ENCODE measurements at regions of chr5 and their contacts with region 1.

Region 1: DNA sequence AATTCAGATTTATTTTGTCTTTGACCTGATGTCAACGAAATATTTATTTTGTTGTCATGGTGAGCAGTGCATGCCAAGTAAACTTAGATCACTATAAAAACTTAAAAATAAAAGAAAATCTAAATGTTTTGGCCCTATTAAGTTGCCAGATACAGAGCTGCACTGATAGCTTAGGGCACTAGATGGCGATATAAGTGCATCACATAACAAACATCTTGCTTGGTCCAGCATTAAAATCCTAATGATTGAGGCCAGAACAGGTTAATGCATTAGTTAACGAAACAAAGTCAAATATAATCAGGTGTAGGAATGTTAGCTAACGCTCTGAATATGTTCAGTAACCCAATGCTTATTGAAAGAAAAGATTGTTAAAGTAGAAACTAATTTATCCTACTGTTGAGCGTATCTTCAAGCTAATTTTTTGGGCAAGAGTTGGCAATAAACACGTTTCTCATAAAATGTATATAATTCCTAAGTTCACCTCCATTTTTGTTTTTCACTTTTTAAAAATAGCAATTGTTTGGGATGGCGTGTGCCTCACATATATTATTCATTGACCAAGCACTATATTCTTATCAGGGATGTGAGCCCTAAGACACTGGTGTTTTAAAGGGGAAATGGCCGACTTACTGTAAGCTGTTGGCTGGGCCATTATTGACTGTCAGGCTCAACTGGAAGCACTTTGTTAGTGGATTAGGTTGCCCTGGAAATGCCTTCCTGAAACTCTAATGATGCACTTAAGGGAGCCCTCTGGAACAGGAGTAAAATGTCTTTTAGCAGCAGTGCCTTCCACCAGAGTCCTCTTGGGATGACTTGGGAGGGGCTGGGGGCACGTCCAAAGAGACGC is 33.3 kb downstream of the KCTD16 start:
- DNase-seq: no peak
- H3K4me3 ChIP-seq: no peak overlapping the region
- H3K27ac ChIP-seq: no peak overlapping the region
- H3K27me3 ChIP-seq: peaks cover 10% of the 10 kb centered on the region
- CTCF ChIP-seq: peak; percentile 91

Region 2: DNA sequence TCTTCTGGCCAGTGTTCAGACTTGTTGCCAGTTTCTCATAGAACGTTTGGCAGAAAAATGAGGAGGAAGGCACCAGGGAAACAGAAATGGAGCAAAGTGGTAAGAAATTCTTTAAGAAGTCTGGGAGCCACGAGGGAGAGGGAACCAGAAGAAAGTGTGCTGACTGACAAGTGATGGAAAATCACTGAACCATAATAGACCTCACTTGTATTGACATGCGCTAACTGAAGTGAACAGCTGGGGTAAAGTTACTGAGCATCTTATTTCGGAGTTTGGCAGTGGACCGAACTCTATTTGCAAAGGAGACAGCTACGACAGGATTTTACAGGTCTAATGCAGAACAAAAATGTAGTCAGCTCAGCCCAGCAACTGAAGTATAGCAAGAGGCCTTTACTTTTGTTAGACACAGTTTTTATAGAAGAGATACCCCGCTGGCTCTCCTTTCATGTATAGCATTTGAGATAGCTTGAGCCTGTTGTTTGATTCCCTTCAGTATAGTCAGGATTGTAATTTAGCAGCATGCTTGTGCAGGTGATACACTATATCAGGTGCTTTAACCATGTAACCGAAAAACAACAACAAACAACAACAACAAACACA is 338.4 kb before region 1 on chr5:
- CTCF ChIA-PET with region 1: no interaction called
- POLR2A ChIA-PET with region 1: no interaction called
- DNase-seq: no peak
- H3K4me3 ChIP-seq: no peak overlapping the region
- H3K27ac ChIP-seq: no peak overlapping the region
- H3K27me3 ChIP-seq: no peaks in the 10 kb centered on the region
- CTCF ChIP-seq: no peak

Region 3: GRCh38 chr5:143908959-143909358 is 295.0 kb before region 1 on chr5:
- CTCF ChIA-PET with region 1: no interaction called
- POLR2A ChIA-PET with region 1: no interaction called
- DNase-seq: no peak
- H3K4me3 ChIP-seq: no peak overlapping the region
- H3K27ac ChIP-seq: no peak overlapping the region
- H3K27me3 ChIP-seq: no peaks in the 10 kb centered on the region
- CTCF ChIP-seq: no peak

Region 4: DNA sequence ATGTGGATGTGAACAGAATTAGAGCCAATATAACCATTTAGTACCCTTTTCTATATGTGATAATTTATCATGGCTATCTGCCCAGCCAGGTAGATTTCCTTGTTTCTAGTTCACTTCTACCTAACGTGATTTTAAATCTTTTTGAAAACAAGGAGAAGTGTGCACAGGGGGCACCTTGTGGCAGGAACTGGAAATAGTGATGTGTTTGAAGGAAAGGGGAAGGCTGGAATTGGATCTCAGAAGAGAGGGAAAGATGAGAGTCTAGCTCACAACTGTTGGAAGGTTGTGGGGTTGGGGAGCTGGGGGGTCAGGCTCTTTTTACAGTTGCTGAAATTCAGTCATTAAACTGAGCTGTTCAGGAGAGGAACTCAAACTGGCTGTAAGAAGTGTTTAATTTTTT is 186.2 kb after region 1 on chr5:
- CTCF ChIA-PET with region 1: interaction called, 27 read pairs
- POLR2A ChIA-PET with region 1: no interaction called
- DNase-seq: no peak
- H3K4me3 ChIP-seq: no peak overlapping the region
- H3K27ac ChIP-seq: no peak overlapping the region
- H3K27me3 ChIP-seq: no peaks in the 10 kb centered on the region
- CTCF ChIP-seq: peak; percentile 44

Region 5: DNA sequence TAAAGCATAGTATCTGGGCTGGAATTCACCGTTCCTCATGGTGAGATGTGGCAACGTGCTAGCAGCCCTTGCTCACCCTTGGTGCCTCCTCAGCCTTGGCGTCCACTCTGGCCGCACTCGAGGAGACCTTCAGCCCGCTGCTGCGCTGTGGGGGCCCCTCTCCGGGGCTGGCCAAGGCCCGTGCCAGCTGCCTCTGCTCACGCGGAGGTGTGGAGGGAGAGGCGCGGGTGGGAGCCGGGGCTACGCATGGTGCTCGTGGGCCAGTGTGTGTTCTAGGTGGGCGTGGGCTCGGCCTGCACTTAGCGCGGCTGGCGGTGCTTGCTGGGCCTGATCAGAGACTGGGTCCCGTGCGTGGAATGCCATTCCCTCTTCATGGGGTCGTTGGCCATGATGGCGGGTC is 390.9 kb after region 1 on chr5:
- CTCF ChIA-PET with region 1: no interaction called
- POLR2A ChIA-PET with region 1: no interaction called
- DNase-seq: no peak
- H3K4me3 ChIP-seq: no peak overlapping the region
- H3K27ac ChIP-seq: no peak overlapping the region
- H3K27me3 ChIP-seq: peaks cover 6% of the 10 kb centered on the region
- CTCF ChIP-seq: no peak

Region 6: GRCh38 chr5:145044970-145045369 is 841.0 kb after region 1 on chr5:
- CTCF ChIA-PET with region 1: no interaction called
- POLR2A ChIA-PET with region 1: no interaction called
- DNase-seq: no peak
- H3K4me3 ChIP-seq: no peak overlapping the region
- H3K27ac ChIP-seq: no peak overlapping the region
- H3K27me3 ChIP-seq: no peaks in the 10 kb centered on the region
- CTCF ChIP-seq: no peak

Region 7: DNA sequence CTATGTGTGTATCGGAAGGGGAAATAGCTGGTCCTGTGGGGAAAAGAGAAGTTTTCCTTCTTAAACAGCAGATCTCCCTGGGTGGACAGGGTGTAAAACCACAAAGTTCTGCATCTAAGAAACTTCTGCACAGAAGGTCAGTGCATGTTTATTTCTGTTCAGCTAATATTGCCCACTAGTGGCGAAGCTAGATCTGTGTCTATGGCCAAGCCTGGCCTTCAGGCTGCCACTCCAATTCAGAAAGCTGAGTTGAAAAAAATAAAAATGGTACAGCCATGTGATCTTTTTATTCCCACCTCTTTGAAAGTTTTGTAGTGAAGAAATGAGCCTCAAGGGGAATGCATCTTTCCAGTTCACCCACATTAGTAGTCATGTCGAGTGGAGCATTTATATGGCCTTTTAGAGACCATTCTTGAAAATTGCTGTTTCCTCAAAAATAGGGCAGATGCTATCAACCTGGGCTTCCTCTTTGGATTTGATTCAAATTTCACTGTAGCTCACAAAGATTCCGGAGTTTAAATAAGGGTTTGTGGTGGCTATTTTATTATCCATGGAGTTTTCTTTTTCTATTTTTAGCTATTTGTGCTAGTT is 1143.1 kb after region 1 on chr5:
- CTCF ChIA-PET with region 1: interaction called, 10 read pairs
- POLR2A ChIA-PET with region 1: no interaction called
- DNase-seq: peak; percentile 13
- H3K4me3 ChIP-seq: no peak overlapping the region
- H3K27ac ChIP-seq: no peak overlapping the region
- H3K27me3 ChIP-seq: no peaks in the 10 kb centered on the region
- CTCF ChIP-seq: peak; percentile 75

Region 8: DNA sequence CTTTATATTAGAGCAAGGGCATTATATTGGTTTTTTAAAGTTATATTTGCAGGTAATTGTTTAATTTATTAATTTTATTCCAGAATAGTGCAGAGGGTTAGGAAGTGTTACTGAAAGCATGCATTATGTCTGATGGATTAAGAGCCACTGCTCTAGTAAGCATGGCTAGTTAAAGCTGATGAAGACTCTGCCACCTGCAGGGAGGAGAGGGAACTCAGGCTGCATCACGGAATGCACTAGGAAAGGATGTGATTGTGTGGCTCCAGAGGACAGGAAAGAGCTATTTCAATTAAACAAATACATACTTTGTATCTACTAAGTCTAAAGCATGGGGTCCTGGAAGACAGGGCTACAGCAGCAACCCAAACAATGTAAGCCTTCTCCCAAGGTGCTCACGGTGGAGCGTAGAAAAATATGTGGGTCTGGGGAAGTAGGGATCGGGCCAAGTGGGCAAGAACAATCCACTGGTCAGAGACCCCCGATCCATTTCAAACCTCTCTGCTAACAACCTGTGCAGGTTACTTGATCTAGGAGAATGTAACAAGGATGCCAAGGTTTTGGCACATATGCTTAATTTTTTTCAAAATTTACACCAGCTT is 1684.1 kb after region 1 on chr5:
- CTCF ChIA-PET with region 1: interaction called, 31 read pairs
- POLR2A ChIA-PET with region 1: no interaction called
- DNase-seq: no peak
- H3K4me3 ChIP-seq: no peak overlapping the region
- H3K27ac ChIP-seq: no peak overlapping the region
- H3K27me3 ChIP-seq: no peaks in the 10 kb centered on the region
- CTCF ChIP-seq: peak; percentile 93

Region 9: GRCh38 chr5:146049014-146049703 is 1845.2 kb after region 1 on chr5:
- CTCF ChIA-PET with region 1: interaction called, 15 read pairs
- POLR2A ChIA-PET with region 1: no interaction called
- DNase-seq: peak; percentile 65
- H3K4me3 ChIP-seq: no peak overlapping the region
- H3K27ac ChIP-seq: no peak overlapping the region
- H3K27me3 ChIP-seq: no peaks in the 10 kb centered on the region
- CTCF ChIP-seq: peak; percentile 86